ENCODE measurements at regions of chr12 and their contacts with region 1.

Region 1: GRCh38 chr12:9118158-9118557 is 2.4 kb upstream of the A2M start:
- DNase-seq: no peak
- ATAC-seq: peak; percentile 61

Region 2: GRCh38 chr12:8876887-8877286 is 241.3 kb before region 1 on chr12:
- intact Hi-C with region 1: no loop called
- DNase-seq: no peak
- ATAC-seq: no peak

Region 3: GRCh38 chr12:9064201-9064814 is 53.9 kb before region 1 on chr12:
- intact Hi-C with region 1: loop called (anchors 2 kb)
- DNase-seq: peak; percentile 81
- ATAC-seq: peak; percentile 86

Region 4: DNA sequence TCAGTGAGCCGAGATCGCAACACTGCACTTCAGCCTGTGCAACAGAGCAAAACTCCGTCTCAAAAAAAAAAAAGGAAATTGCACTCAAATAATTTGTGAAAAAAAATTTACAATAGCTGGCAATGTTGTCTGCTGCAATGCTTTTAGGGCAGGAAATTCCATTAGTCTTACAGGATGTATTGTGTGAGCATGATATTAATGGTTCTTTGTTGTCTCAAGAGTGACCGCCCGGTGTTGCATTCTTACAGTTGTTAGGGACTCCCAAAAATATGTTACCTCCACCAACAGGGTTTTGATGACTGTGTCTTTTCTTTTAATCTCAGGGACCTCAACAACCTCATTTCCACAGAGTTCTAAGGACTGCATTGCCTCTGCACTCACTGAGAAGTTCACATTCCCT is 45.2 kb after region 1 on chr12:
- intact Hi-C with region 1: loop called (anchors 2 kb)
- DNase-seq: no peak
- ATAC-seq: no peak

Measured in Right ventricle myocardium inferior (tissue), 1 donor.